Vagina (tissue), 2 donors: ENCODE measurements at regions of chr2 and their contacts with region 1.

Region 1: GRCh38 chr2:127064642-127065250 is 42.2 kb downstream of the BIN1 start:
- DNase-seq: peak in 1 of 2 donors; percentile 97
- H3K4me3 ChIP-seq: peak overlapping the region in 1 of 2 donors; percentile 23
- H3K27ac ChIP-seq: peak overlapping the region; percentile 94
- H3K4me1 ChIP-seq: peaks cover 57% of the 10 kb centered on the region
- H3K27me3 ChIP-seq: no peaks in the 10 kb centered on the region
- CTCF ChIP-seq: no peak
- POLR2A ChIP-seq: peak in 1 of 2 donors; percentile 17

Region 2: GRCh38 chr2:127174136-127174535 is 109.4 kb after region 1 on chr2:
- intact Hi-C with region 1: loop called (anchors 10 kb)
- DNase-seq: peak in 1 of 2 donors; percentile 81
- H3K4me3 ChIP-seq: no peak overlapping the region
- H3K27ac ChIP-seq: peak overlapping the region; percentile 93
- H3K4me1 ChIP-seq: peaks cover 51% of the 10 kb centered on the region
- H3K27me3 ChIP-seq: no peaks in the 10 kb centered on the region
- CTCF ChIP-seq: peak in 1 of 3 experiments; percentile 40
- POLR2A ChIP-seq: no peak